ENCODE measurements at regions of chr16 and their contacts with region 1.

Region 1: DNA sequence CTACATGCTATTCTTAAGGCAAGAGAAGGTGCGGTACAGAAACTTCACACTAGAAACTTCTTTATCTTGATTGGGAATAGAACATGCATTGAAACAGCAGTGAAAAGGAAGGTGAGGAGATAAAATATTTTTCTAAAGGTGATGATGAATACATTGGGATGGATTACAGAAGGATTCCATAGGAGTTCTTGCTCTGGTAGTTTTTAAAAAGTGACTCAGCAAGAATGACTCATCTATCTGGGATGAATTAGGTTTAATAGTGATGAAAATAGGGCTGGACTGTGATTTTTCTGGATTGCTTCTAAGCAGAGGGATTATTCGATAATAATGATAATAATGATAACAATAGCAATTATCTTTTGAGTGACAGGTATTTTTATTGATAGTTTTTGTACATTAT is 65.6 kb upstream of the HS3ST4 start:
- DNase-seq: peak; percentile 19
- H3K4me3 ChIP-seq: no peak overlapping the region
- H3K27ac ChIP-seq: no peak overlapping the region
- H3K4me1 ChIP-seq: no peaks in the 10 kb centered on the region
- H3K27me3 ChIP-seq: no peaks in the 10 kb centered on the region

Region 2: GRCh38 chr16:25344006-25344405 is 282.2 kb before region 1 on chr16:
- in situ Hi-C with region 1: no loop called
- DNase-seq: no peak
- H3K4me3 ChIP-seq: no peak overlapping the region
- H3K27ac ChIP-seq: no peak overlapping the region
- H3K4me1 ChIP-seq: no peaks in the 10 kb centered on the region
- H3K27me3 ChIP-seq: no peaks in the 10 kb centered on the region

Region 3: GRCh38 chr16:25569011-25569410 is 57.2 kb before region 1 on chr16:
- in situ Hi-C with region 1: loop called (anchors 10 kb)
- DNase-seq: no peak
- H3K4me3 ChIP-seq: no peak overlapping the region
- H3K27ac ChIP-seq: no peak overlapping the region
- H3K4me1 ChIP-seq: no peaks in the 10 kb centered on the region
- H3K27me3 ChIP-seq: no peaks in the 10 kb centered on the region